PC-3 (cell line): ENCODE measurements at regions of chr6 and their contacts with region 1.

Region 1: DNA sequence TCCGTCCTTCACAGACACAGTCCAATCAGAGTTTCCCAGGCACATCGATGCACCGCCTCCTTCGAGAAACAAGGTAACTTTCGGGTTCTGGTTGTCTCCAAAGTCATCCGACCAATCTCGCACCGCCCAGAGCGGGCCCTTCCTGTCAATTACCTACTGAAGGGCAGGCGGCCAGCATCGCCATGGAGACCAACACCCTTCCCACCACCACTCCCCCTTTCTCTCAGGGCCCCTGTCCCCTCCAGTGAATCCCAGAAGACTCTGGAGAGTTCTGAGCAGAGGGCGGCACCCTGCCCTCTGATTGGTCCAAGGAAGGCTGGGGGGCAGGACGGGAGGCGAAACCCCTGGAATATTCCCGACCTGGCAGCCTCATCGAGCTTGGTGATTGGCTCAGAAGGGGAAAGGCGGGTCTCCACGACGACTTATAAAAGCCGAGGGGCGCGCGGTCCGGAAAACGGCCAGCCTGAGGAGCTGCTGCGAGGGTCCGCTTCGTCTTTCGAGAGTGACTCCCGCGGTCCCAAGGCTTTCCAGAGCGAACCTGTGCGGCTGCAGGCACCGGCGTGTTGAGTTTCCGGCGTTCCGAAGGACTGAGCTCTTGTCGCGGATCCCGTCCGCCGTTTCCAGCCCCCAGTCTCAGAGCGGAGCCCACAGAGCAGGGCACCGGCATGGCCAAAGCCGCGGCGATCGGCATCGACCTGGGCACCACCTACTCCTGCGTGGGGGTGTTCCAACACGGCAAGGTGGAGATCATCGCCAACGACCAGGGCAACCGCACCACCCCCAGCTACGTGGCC is at the start of gene HSPA1B:
- DNase-seq: peak; percentile 99
- ATAC-seq: peak; percentile 82
- H3K4me3 ChIP-seq: peak within 1 kb of the TSS; percentile 95
- H3K27ac ChIP-seq: peak within 1 kb of the TSS; percentile 82
- H3K4me1 ChIP-seq: peaks cover 43% of the 10 kb centered on the region
- H3K27me3 ChIP-seq: no peaks in the 10 kb centered on the region
- CTCF ChIP-seq: no peak
- total RNA-seq, gene HSPA1B: 265 and 331 TPM in 2 replicates

Region 2: DNA sequence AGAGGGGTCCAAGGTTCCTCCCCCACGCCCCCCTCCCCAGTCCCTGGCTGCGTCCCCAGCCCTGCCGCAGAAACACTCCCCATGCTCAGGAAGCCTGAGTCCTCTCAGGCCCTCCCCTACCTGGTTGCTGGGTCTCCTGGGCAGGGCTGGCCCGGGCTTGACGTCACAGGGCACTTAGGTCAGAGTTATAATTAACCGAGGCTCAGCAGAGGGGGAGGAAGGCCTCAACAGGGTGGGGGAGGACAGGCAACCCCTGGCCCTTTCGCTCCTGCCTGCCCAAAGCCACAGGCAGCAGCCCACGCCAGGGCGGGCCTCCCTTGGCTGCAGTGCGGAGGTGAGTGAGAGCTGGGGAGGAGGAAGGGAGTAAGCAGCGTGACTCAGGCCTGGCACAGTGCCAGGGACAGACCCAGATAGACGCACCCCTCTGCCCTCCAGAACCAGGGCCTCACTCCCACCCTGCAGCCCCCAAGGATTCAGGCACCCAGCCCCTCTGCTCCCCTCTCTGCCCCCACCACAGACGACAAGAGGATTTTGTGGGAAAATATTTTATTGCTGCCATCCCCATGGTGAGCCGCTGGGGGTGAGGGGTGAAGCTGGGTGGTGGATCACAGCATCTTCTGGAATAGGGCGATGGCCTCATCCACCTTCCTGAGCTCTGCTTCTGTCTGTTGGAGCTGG is 50.4 kb before region 1 on chr6 and contains the start of gene VWA7:
- CTCF ChIA-PET with region 1: interaction called, 8 read pairs
- POLR2A ChIA-PET with region 1: interaction called, 3 read pairs
- intact Hi-C with region 1: loop called (anchors 2 kb)
- DNase-seq: peak; percentile 88
- ATAC-seq: peak; percentile 79
- H3K4me3 ChIP-seq: peak within 1 kb of the TSS; percentile 43
- H3K27ac ChIP-seq: peak within 1 kb of the TSS; percentile 69
- H3K4me1 ChIP-seq: peaks cover 29% of the 10 kb centered on the region
- H3K27me3 ChIP-seq: no peaks in the 10 kb centered on the region
- CTCF ChIP-seq: no peak
- total RNA-seq, gene VWA7: 0.98 and 1.9 TPM in 2 replicates

Region 3: GRCh38 chr6:31806465-31807272 is 20.8 kb before region 1 on chr6 and contains the start of gene LSM2:
- CTCF ChIA-PET with region 1: interaction called, 3 read pairs
- POLR2A ChIA-PET with region 1: interaction called, 20 read pairs
- intact Hi-C with region 1: no loop called
- DNase-seq: peak; percentile 96
- ATAC-seq: peak; percentile 99
- H3K4me3 ChIP-seq: peak within 1 kb of the TSS; percentile 73
- H3K27ac ChIP-seq: peak within 1 kb of the TSS; percentile 53
- H3K4me1 ChIP-seq: peaks cover 6% of the 10 kb centered on the region
- H3K27me3 ChIP-seq: no peaks in the 10 kb centered on the region
- CTCF ChIP-seq: peak; percentile 55
- total RNA-seq, gene LSM2: 93.7 and 143 TPM in 2 replicates

Region 4: GRCh38 chr6:31862344-31863227 is 35.1 kb after region 1 on chr6 and contains the start of gene NEU1:
- CTCF ChIA-PET with region 1: no interaction called
- POLR2A ChIA-PET with region 1: interaction called, 13 read pairs
- intact Hi-C with region 1: no loop called
- DNase-seq: peak; percentile 100
- ATAC-seq: peak; percentile 96
- H3K4me3 ChIP-seq: peak within 1 kb of the TSS; percentile 79
- H3K27ac ChIP-seq: peak within 1 kb of the TSS; percentile 77
- H3K4me1 ChIP-seq: peaks cover 5% of the 10 kb centered on the region; the same call in 1 of the 2 replicates
- H3K27me3 ChIP-seq: no peaks in the 10 kb centered on the region
- CTCF ChIP-seq: no peak
- total RNA-seq, gene NEU1: 31.7 and 33.1 TPM in 2 replicates